ENCODE measurements at regions of chr3 and their contacts with region 1.

Region 1: DNA sequence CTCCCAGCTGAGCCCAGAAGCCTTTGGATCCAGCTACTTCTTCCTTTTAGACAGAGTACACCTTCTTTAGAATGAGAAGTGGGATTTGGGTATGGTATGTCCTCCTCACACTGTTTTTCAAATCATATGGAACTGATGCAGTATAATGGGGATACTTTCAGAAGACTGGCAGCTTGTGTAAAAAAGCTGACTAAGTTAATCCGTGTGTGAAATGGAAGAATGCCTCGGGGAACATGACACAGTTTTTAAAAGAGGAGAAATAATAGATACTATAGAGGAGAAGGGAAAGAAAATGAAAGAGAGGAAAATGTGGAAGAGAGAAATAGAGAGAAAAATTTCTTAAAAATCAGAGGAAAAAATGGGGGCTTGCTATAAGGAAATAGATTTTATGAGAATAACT is 47.7 kb downstream of the TUSC7 start:
- DNase-seq: no peak
- ATAC-seq: no peak
- H3K4me3 ChIP-seq: no peak overlapping the region
- H3K27ac ChIP-seq: no peak overlapping the region
- H3K4me1 ChIP-seq: no peaks in the 10 kb centered on the region
- H3K27me3 ChIP-seq: no peaks in the 10 kb centered on the region
- CTCF ChIP-seq: no peak
- EP300 ChIP-seq: no peak
- POLR2A ChIP-seq: no peak
- RAD21 ChIP-seq: no peak

Region 2: GRCh38 chr3:116140100-116140689 is 617.1 kb before region 1 on chr3:
- CTCF ChIA-PET with region 1: interaction called, 23 read pairs
- POLR2A ChIA-PET with region 1: no interaction called
- in situ Hi-C with region 1: loop called (anchors 5 kb)
- intact Hi-C with region 1: loop called (anchors 1 kb)
- DNase-seq: peak; percentile 9
- ATAC-seq: no peak
- H3K4me3 ChIP-seq: no peak overlapping the region
- H3K27ac ChIP-seq: no peak overlapping the region
- H3K4me1 ChIP-seq: no peaks in the 10 kb centered on the region
- H3K27me3 ChIP-seq: no peaks in the 10 kb centered on the region
- CTCF ChIP-seq: peak; percentile 55
- EP300 ChIP-seq: no peak
- POLR2A ChIP-seq: no peak
- RAD21 ChIP-seq: 0 out of 2 replicates have a peak, but pooled peaks have one; percentile 14

Region 3: DNA sequence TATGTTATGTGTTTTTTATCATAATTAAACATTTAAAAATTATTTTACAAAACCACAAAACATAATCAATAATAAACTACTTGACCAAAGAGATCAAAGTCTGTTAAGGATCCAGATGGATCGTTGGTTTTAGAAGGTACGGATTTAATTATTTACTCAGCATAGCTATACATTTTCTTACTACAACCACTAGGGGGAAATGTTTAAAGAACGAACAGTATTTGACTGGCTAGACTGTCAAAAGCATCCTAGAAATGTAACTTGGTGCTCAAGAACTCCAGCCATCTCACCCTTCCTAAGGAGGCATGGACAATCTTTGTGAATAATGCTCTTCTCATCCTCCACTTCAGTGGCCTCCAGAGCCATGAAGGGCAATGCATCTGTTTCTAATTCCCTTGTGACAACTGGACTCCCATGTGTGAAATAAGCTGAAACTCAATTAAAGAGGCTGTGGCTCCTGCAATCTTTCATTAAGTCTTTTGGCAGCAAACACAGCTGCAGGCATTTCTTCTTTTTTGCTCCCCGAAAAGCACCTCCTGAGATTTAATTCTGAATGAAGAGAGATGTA is 142.4 kb before region 1 on chr3:
- CTCF ChIA-PET with region 1: no interaction called
- POLR2A ChIA-PET with region 1: no interaction called
- in situ Hi-C with region 1: no loop called
- intact Hi-C with region 1: loop called (anchors 1 kb)
- DNase-seq: peak; percentile 5
- ATAC-seq: peak; percentile 75
- H3K4me3 ChIP-seq: no peak overlapping the region
- H3K27ac ChIP-seq: no peak overlapping the region
- H3K4me1 ChIP-seq: no peaks in the 10 kb centered on the region
- H3K27me3 ChIP-seq: no peaks in the 10 kb centered on the region
- CTCF ChIP-seq: 0 out of 2 replicates have a peak, but pooled peaks have one; percentile 20
- EP300 ChIP-seq: no peak
- POLR2A ChIP-seq: no peak
- RAD21 ChIP-seq: no peak

Region 4: GRCh38 chr3:116707531-116707930 is 49.8 kb before region 1 on chr3:
- CTCF ChIA-PET with region 1: no interaction called
- POLR2A ChIA-PET with region 1: no interaction called
- in situ Hi-C with region 1: no loop called
- intact Hi-C with region 1: no loop called
- DNase-seq: no peak
- ATAC-seq: no peak
- H3K4me3 ChIP-seq: no peak overlapping the region
- H3K27ac ChIP-seq: no peak overlapping the region
- H3K4me1 ChIP-seq: no peaks in the 10 kb centered on the region
- H3K27me3 ChIP-seq: no peaks in the 10 kb centered on the region; a peak in 1 of 5 replicates
- CTCF ChIP-seq: no peak
- EP300 ChIP-seq: no peak
- POLR2A ChIP-seq: no peak
- RAD21 ChIP-seq: no peak